Right ventricle myocardium superior (tissue), 1 donor: ENCODE measurements at regions of chr3 and their contacts with region 1.

Region 1: DNA sequence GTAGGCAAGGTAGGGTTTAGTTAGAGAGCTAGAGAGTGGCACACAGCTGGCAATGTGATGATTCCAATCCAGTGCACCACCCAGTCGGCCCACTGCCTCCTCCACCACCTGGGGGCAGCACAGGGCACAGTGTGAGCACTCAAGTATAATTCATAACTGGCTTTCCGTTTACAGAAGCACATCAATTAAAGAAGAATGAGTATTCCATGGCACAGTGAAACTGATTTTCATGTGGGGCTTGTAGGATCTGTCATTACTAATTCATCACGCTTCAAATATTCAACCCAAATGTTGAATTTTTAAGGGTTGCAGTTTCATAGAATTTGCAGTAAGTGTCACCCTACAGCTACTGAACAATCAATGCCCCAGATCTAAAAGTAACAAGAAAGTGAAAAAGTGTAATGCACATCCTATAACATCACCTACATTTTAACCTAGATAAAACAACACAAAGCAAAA is 149.9 kb downstream of the IGSF11 start:
- DNase-seq: peak; percentile 85
- ATAC-seq: peak; percentile 91

Region 2: DNA sequence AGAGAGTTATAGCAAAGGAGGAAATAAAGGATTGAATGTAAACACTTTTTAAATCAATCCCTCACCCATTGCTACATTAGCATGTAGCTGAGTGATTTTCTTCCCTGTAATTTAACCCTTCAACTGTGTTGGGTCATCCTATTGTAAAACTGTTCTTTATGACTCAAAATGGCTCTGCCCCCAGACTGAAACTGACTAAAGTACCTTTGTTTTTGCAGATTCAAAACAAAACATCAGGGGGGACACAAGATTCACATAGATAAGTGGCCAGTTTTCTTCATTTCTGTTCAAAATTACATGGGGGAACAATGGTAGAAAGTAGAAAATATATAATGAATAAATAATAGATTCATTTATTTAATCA is 118.5 kb before region 1 on chr3:
- intact Hi-C with region 1: no loop called
- DNase-seq: no peak
- ATAC-seq: no peak

Region 3: DNA sequence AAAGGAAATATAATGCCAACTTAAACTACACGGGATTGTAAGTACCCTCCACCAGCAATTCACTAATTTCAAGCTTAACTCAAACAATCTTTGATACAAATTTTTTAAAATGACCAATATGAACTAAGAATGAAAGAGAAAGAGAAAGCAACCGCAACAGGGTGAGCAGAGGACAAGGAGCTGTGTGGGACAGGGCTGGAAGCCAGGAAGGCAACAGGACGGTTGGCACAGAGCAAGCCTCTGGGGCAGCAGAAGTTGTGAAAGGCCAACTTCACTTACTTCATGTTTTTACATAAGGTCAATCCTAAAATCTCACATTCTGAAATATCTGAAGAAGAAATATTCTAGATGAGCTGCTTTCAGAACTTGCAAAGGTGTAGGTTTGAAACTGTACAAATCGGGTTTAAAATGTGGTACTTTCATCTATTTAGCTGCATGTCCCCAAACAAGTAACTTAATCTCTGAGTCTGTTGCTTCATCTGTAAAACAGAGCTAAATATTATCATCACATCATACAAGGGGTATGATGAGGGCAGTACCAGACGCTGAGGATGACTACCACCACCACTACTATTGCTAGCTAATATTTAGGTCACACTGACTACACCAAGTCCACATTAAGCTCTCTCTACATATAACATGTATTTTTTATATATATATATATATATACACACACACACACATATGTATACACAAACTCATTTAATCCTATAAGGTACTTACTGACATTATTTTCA is 48.2 kb after region 1 on chr3:
- intact Hi-C with region 1: no loop called
- DNase-seq: peak; percentile 61
- ATAC-seq: peak; percentile 91

Region 4: GRCh38 chr3:119034256-119035013 is 149.7 kb after region 1 on chr3 and contains the start of gene IGSF11:
- intact Hi-C with region 1: loop called (anchors 1 kb)
- DNase-seq: peak; percentile 76
- ATAC-seq: peak; percentile 99
- total RNA-seq, gene IGSF11: 2.9 TPM

Region 5: DNA sequence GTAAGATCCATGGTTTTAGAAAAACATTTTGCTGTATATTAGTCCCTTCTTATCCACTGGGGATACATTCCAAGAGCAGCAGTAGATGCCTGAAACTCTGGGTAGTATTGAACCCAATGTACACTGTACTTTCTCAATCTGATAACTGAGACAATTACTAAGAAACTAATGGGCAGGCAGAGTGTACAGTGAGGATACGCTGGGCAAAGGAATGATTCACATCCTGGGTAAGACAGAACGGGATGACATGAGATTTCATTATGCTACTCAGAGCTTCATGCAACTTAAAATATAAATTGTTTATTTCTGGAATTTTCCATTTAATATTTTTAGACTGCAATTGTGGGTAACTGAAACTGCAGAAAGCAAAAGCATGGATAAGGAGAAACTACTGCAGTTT is 215.0 kb after region 1 on chr3:
- intact Hi-C with region 1: loop called (anchors 1 kb)
- DNase-seq: no peak
- ATAC-seq: no peak